Activated B cell treated with CpG ODN at 0.5 μM for 24 hours (primary cell): ENCODE measurements at regions of chr7 and their contacts with region 1.

Region 1: GRCh38 chr7:101217388-101218235 is at the starts of genes PLOD3 and ZNHIT1:
- DNase-seq: peak; percentile 82
- ATAC-seq: peak; percentile 77
- H3K4me3 Mint-ChIP-seq: peak within 1 kb of the TSS; percentile 94
- H3K27ac Mint-ChIP-seq: peak within 1 kb of the TSS; percentile 84
- H3K4me1 Mint-ChIP-seq: peaks cover 30% of the 10 kb centered on the region
- H3K27me3 Mint-ChIP-seq: no peaks in the 10 kb centered on the region
- CTCF ChIP-seq: no peak
- total RNA-seq, gene PLOD3: 29.8 and 40.0 TPM in 2 replicates
- total RNA-seq, gene ZNHIT1: 37.6 and 43.4 TPM in 2 replicates

Region 2: GRCh38 chr7:101085162-101085987 is 132.2 kb before region 1 on chr7 and contains the start of gene TRIM56:
- CTCF ChIA-PET with region 1: no interaction called
- POLR2A ChIA-PET with region 1: no interaction called
- intact Hi-C with region 1: no loop called
- DNase-seq: peak; percentile 69
- ATAC-seq: peak; percentile 99
- H3K4me3 Mint-ChIP-seq: peak within 1 kb of the TSS; percentile 99
- H3K27ac Mint-ChIP-seq: peak within 1 kb of the TSS; percentile 97
- H3K4me1 Mint-ChIP-seq: peaks cover 24% of the 10 kb centered on the region
- H3K27me3 Mint-ChIP-seq: no peaks in the 10 kb centered on the region
- CTCF ChIP-seq: no peak
- total RNA-seq, gene TRIM56: 53.0 and 57.5 TPM in 2 replicates

Region 3: GRCh38 chr7:101165075-101165957 is 52.3 kb before region 1 on chr7 and contains the start of gene VGF:
- CTCF ChIA-PET with region 1: no interaction called
- POLR2A ChIA-PET with region 1: interaction called, 8 read pairs
- intact Hi-C with region 1: loop called (anchors 1 kb)
- DNase-seq: peak; percentile 92
- ATAC-seq: peak; percentile 80
- H3K4me3 Mint-ChIP-seq: peak within 1 kb of the TSS; percentile 82
- H3K27ac Mint-ChIP-seq: peak within 1 kb of the TSS; percentile 53
- H3K4me1 Mint-ChIP-seq: peaks cover 46% of the 10 kb centered on the region
- H3K27me3 Mint-ChIP-seq: peaks cover 42% of the 10 kb centered on the region
- CTCF ChIP-seq: no peak
- total RNA-seq, gene VGF: 0.07 and 0.11 TPM in 2 replicates

Region 4: DNA sequence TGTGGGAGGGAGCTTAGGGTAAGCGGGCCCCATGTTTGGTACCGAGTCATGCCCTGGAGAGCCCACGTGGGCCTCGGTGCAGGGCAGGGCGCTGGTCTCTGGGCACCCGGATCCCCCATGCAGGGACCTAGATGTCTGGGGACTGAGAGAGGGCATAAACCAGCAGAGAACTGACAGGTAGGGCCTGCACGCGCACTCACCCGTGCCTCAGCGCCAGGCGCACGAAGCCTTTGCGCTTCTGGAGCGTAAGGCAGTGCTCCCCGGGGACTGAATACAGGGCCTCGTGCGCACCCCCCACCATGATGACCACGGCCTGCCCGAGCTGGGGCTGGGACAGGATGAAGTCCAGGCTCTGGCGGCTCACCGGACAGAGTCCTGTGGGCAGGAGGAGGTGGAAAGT is 19.6 kb before region 1 on chr7:
- CTCF ChIA-PET with region 1: interaction called, 12 read pairs
- POLR2A ChIA-PET with region 1: interaction called, 15 read pairs
- intact Hi-C with region 1: no loop called
- DNase-seq: no peak
- ATAC-seq: no peak
- H3K4me3 Mint-ChIP-seq: no peak overlapping the region
- H3K27ac Mint-ChIP-seq: no peak overlapping the region
- H3K4me1 Mint-ChIP-seq: peaks cover 11% of the 10 kb centered on the region
- H3K27me3 Mint-ChIP-seq: peaks cover 19% of the 10 kb centered on the region
- CTCF ChIP-seq: no peak

Region 5: GRCh38 chr7:101244375-101245146 is 26.9 kb after region 1 on chr7 and contains the start of gene FIS1:
- CTCF ChIA-PET with region 1: interaction called, 29 read pairs
- POLR2A ChIA-PET with region 1: interaction called, 44 read pairs
- intact Hi-C with region 1: loop called (anchors 1 kb)
- DNase-seq: peak; percentile 96
- ATAC-seq: peak; percentile 94
- H3K4me3 Mint-ChIP-seq: peak within 1 kb of the TSS; percentile 95
- H3K27ac Mint-ChIP-seq: peak within 1 kb of the TSS; percentile 95
- H3K4me1 Mint-ChIP-seq: peaks cover 42% of the 10 kb centered on the region
- H3K27me3 Mint-ChIP-seq: no peaks in the 10 kb centered on the region
- CTCF ChIP-seq: no peak
- total RNA-seq, gene FIS1: 113 and 117 TPM in 2 replicates

Region 6: GRCh38 chr7:101251871-101252659 is 34.5 kb after region 1 on chr7:
- CTCF ChIA-PET with region 1: no interaction called
- POLR2A ChIA-PET with region 1: interaction called, 22 read pairs
- intact Hi-C with region 1: loop called (anchors 1 kb)
- DNase-seq: peak; percentile 98
- ATAC-seq: peak; percentile 100
- H3K4me3 Mint-ChIP-seq: peak overlapping the region; percentile 100
- H3K27ac Mint-ChIP-seq: peak overlapping the region; percentile 96
- H3K4me1 Mint-ChIP-seq: peaks cover 29% of the 10 kb centered on the region
- H3K27me3 Mint-ChIP-seq: peaks cover 8% of the 10 kb centered on the region
- CTCF ChIP-seq: no peak

Region 7: DNA sequence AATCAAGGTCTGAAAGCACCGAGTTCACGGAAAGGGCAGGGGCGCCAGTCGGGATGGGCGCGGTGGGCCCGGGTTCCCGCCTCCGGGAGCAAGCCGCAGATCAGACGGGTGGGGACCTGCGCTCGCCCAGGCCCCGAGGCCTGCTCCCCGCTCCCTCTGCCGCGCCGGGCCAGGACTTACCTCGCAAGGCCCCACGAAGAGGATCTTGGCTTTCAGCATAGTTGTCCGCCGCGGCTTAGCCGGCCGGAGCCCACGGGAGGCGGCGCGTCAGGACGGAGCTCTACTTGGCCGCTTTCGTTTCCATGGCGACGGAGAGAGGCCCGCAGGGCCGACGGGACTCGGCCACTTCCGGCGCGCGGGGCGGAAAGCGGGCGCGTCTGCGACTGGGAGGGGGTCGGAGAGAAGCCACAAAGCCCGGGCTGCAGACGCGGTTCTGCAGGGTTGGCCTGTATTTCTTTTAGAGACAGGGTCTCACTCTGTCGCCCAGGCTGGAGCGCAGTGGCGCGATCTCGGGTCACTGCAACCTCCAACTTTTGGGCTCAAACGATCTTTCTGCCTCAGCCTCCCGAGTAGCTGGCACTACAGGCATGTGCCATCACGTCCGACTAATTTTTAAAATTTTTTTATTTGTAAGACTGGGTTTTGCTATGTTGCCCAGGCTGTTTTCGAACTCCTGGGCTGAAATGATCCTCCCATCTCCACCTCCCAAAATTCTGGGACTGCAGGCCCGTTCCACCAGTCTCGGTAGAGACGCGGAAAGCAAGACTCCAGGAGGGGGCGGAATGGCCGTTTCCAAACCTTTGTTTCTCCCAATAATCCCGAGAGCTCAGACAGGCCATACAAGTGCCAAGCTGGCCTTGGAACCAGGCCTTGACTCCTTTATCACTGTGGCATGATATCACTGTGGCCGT is 104.1 kb after region 1 on chr7 and contains the start of gene IFT22:
- CTCF ChIA-PET with region 1: no interaction called
- POLR2A ChIA-PET with region 1: no interaction called
- intact Hi-C with region 1: loop called (anchors 1 kb)
- DNase-seq: peak; percentile 85
- ATAC-seq: peak; percentile 98
- H3K4me3 Mint-ChIP-seq: peak within 1 kb of the TSS; percentile 89
- H3K27ac Mint-ChIP-seq: peak within 1 kb of the TSS; percentile 76
- H3K4me1 Mint-ChIP-seq: peaks cover 18% of the 10 kb centered on the region
- H3K27me3 Mint-ChIP-seq: no peaks in the 10 kb centered on the region
- CTCF ChIP-seq: no peak
- total RNA-seq, gene IFT22: 9.8 and 10.7 TPM in 2 replicates